GM10248 (cell line): ENCODE measurements at regions of chr11 and their contacts with region 1.

Region 1: DNA sequence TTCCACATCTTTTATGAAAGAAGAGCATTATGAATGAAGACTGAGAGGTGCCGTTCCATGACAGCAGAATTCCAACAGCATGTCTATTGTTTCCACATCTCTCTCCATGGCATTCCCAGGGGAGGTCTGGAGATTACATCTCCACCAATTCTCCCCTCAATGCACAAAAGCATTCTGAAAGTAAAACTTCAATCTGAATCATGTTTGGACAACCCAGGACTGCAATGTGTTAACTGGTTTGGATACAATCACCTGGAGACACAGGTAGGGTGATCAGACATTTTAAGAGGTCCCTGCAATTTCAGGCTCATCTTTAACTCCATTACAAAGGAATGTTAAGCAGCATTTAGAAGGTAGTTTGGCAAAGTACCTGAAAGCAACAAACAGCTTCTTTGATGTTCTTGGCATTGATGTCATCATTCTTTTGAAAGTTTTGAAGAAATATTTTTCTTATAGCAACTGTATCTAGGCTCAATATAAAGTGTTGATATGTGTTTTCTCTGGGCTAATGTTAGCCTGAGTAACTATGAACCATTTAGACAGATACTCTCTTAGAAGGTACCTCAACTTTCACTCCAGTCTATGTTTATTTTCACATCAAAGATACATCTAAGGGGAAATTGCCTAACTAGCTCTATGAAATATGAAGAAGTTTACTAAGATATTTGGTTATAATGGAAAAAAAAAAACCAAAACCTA is 181.4 kb upstream of the MTMR2 start:
- DNase-seq: no peak
- CTCF ChIP-seq: no peak

Region 2: GRCh38 chr11:96091476-96091875 is 13.9 kb before region 1 on chr11:
- CTCF ChIA-PET with region 1: interaction called, 11 read pairs
- POLR2A ChIA-PET with region 1: no interaction called
- DNase-seq: peak; percentile 13
- CTCF ChIP-seq: no peak

Region 3: DNA sequence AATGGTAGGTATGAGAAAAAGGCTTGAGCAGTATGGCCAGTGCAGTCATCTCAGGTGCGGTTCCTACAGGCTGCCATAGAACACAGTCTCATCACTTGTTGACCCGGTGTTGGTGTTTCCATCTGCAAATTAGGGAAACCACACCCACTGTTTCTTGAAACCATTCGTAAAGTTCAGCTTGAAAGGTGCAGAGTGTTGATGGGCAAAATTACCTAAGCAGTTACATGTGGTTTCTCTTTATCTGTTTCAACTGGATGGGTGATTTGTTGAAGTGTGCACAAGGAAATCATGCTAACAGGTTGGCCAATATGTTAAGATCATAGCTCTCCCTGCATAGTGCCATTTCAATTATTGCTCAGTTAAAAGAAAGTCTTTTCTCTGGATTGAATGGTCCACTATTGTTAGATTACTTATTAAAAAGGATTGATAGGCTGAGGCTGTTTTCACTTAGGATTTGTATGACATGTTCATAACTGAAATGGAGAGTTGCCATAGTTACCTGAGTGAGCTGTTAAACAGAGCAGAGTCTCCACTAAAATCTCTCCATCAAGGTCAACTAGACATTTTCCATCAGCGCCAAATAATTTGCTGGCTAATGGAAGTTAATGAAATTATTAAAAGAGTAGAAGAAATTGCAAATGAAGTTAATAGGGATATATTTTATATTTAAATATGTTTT is 21.7 kb after region 1 on chr11:
- CTCF ChIA-PET with region 1: no interaction called
- POLR2A ChIA-PET with region 1: no interaction called
- DNase-seq: no peak
- CTCF ChIP-seq: no peak